Sciatic nerve (tissue), 2 donors: ENCODE measurements at regions of chr1 and their contacts with region 1.

Region 1: GRCh38 chr1:96208428-96208827 is 513.2 kb upstream of the PTBP2 start:
- DNase-seq: no peak
- ATAC-seq: no peak

Region 2: GRCh38 chr1:95257758-95258157 is 950.7 kb before region 1 on chr1:
- intact Hi-C with region 1: no loop called
- DNase-seq: no peak
- ATAC-seq: no peak

Region 3: GRCh38 chr1:96259399-96259798 is 51.0 kb after region 1 on chr1:
- intact Hi-C with region 1: loop called (anchors 2 kb)
- DNase-seq: no peak
- ATAC-seq: no peak